Activated CD4-positive, alpha-beta T cell treated with anti-CD3 and anti-CD28 coated beads for 36 hours (primary cell): ENCODE measurements at regions of chr5 and their contacts with region 1.

Region 1: GRCh38 chr5:157464519-157465171 is 4.6 kb downstream of the NIPAL4 start:
- DNase-seq: peak; percentile 87
- ATAC-seq: peak; percentile 92
- H3K4me3 Mint-ChIP-seq: peak overlapping the region; percentile 34
- H3K27ac Mint-ChIP-seq: peak overlapping the region; percentile 84
- H3K4me1 Mint-ChIP-seq: peaks cover 36% of the 10 kb centered on the region
- H3K27me3 Mint-ChIP-seq: peaks cover 18% of the 10 kb centered on the region

Region 2: GRCh38 chr5:157167214-157167621 is 297.4 kb before region 1 on chr5:
- CTCF ChIA-PET with region 1: no interaction called
- POLR2A ChIA-PET with region 1: no interaction called
- intact Hi-C with region 1: no loop called
- DNase-seq: no peak
- ATAC-seq: peak; percentile 74
- H3K4me3 Mint-ChIP-seq: peak overlapping the region; percentile 47
- H3K27ac Mint-ChIP-seq: peak overlapping the region; percentile 88
- H3K4me1 Mint-ChIP-seq: peaks cover 76% of the 10 kb centered on the region
- H3K27me3 Mint-ChIP-seq: no peaks in the 10 kb centered on the region

Region 3: GRCh38 chr5:157390551-157391297 is 73.9 kb before region 1 on chr5:
- CTCF ChIA-PET with region 1: no interaction called
- POLR2A ChIA-PET with region 1: no interaction called
- intact Hi-C with region 1: loop called (anchors 1 to 5 kb)
- DNase-seq: peak; percentile 88
- ATAC-seq: peak; percentile 98
- H3K4me3 Mint-ChIP-seq: peak overlapping the region; percentile 12
- H3K27ac Mint-ChIP-seq: peak overlapping the region; percentile 96
- H3K4me1 Mint-ChIP-seq: peaks cover 24% of the 10 kb centered on the region
- H3K27me3 Mint-ChIP-seq: no peaks in the 10 kb centered on the region

Region 4: GRCh38 chr5:157540707-157541446 is 76.2 kb after region 1 on chr5:
- CTCF ChIA-PET with region 1: no interaction called
- POLR2A ChIA-PET with region 1: no interaction called
- intact Hi-C with region 1: loop called (anchors 2 kb)
- DNase-seq: peak; percentile 68
- ATAC-seq: peak; percentile 85
- H3K4me3 Mint-ChIP-seq: peak overlapping the region; percentile 21
- H3K27ac Mint-ChIP-seq: peak overlapping the region; percentile 79
- H3K4me1 Mint-ChIP-seq: peaks cover 73% of the 10 kb centered on the region
- H3K27me3 Mint-ChIP-seq: no peaks in the 10 kb centered on the region

Region 5: GRCh38 chr5:157731272-157732129 is 266.9 kb after region 1 on chr5 and contains the start of gene THG1L:
- CTCF ChIA-PET with region 1: no interaction called
- POLR2A ChIA-PET with region 1: no interaction called
- intact Hi-C with region 1: loop called (anchors 1 to 2 kb)
- DNase-seq: peak; percentile 99
- ATAC-seq: peak; percentile 95
- H3K4me3 Mint-ChIP-seq: peak within 1 kb of the TSS; percentile 86
- H3K27ac Mint-ChIP-seq: peak within 1 kb of the TSS; percentile 96
- H3K4me1 Mint-ChIP-seq: peaks cover 27% of the 10 kb centered on the region
- H3K27me3 Mint-ChIP-seq: no peaks in the 10 kb centered on the region
- total RNA-seq, gene THG1L: 29.9 to 33.8 TPM

Region 6: DNA sequence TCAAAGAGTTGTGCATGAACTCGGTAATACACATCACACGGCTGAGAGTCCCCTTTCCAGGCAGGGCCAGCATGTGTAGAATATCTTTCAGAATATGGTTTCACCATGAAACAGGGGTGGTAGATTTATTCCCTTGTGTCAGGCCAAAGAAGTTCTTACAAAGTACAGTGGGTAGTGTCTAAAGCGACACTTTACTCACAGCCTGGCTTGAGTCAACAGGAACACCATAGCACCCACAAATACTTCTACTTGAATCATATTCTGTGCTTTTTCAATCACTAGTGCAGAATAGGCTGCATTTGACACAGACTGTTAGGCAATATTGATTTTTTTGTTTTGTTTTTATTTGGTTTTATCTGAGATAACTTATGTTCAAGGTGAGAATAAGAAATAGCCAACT is 291.5 kb after region 1 on chr5:
- CTCF ChIA-PET with region 1: no interaction called
- POLR2A ChIA-PET with region 1: no interaction called
- intact Hi-C with region 1: no loop called
- DNase-seq: no peak
- ATAC-seq: no peak
- H3K4me3 Mint-ChIP-seq: no peak overlapping the region
- H3K27ac Mint-ChIP-seq: no peak overlapping the region
- H3K4me1 Mint-ChIP-seq: peaks cover 4% of the 10 kb centered on the region
- H3K27me3 Mint-ChIP-seq: no peaks in the 10 kb centered on the region

Region 7: GRCh38 chr5:158560170-158560569 is 1095.5 kb after region 1 on chr5:
- CTCF ChIA-PET with region 1: no interaction called
- POLR2A ChIA-PET with region 1: no interaction called
- intact Hi-C with region 1: no loop called
- DNase-seq: no peak
- ATAC-seq: no peak
- H3K4me3 Mint-ChIP-seq: no peak overlapping the region
- H3K27ac Mint-ChIP-seq: no peak overlapping the region
- H3K4me1 Mint-ChIP-seq: no peaks in the 10 kb centered on the region
- H3K27me3 Mint-ChIP-seq: peaks cover 2% of the 10 kb centered on the region